SK-N-SH (cell line): ENCODE measurements at regions of chr3 and their contacts with region 1.

Region 1: DNA sequence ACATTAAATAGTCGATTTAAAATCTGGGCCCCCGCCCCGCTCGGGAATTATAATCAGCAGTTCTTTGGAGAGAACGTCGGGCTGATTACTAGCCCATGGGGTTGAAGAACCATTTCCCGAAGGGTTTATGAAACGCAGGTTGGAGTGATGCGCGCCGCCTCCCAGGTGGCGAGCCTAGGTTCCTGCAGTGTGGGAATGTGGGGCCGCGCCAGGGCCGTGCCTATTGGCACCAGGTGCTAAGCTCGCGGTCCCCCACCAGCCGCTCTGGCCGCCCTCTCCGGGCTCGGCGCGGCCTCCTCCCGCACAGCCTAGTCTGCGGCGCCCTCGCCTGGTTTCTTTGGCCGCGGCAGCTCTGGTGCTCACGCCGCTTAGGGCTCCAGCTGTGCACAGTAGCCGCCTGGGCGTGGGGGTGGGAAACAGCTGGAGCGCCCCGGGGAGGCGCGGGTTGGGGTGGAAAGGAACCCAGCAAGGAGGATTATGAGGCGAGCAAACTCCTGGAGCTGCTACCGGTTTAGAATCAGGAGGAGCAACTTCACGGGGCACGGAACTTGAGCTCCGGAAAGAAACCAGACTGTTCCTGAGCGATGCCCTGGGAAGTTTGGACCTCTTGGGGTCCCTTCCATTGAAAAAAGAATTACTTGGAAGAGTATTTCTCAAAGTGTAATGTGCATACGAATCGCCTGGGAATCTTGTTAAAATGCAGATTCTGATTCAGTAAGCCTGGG is 5.6 kb upstream of the MECOM start:
- DNase-seq: peak; percentile 89
- H3K4me3 ChIP-seq: peak overlapping the region; percentile 35 to 54
- H3K27ac ChIP-seq: no peak overlapping the region
- H3K4me1 ChIP-seq: peaks cover 6 to 9% of the 10 kb centered on the region in 2 experiments; a peak in 2 of 4 replicates
- H3K27me3 ChIP-seq: peaks cover 67% of the 10 kb centered on the region
- CTCF ChIP-seq: peak; percentile 66
- EP300 ChIP-seq: no peak
- RAD21 ChIP-seq: peak; percentile 88

Region 2: DNA sequence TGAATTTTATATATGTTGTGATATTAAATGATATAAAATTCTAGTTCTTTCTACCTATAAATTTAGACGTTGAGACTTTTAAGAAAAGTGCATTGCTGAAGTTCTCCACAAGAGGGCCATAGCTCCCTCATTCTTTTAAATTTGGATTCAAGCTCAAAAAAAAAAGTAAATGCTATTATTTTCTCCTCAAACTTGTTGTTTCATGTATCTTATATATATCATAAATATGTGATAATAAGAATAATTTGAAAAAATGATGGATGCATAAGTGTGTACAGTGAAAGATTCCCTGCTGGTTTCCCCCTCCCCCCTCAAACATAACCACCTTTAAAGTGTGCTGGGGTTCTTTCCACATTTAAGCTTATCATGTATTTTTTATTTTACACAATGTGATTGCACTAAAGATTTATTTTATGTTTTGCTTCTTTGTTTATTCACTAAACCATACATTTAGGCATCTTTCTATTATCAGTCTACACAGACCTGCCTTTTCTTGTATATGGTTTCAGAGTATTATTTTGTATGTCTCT is 804.0 kb before region 1 on chr3:
- CTCF ChIA-PET with region 1: interaction called, 40 read pairs
- POLR2A ChIA-PET with region 1: no interaction called
- DNase-seq: peak; percentile 3
- H3K4me3 ChIP-seq: no peak overlapping the region
- H3K27ac ChIP-seq: no peak overlapping the region
- H3K4me1 ChIP-seq: no peaks in the 10 kb centered on the region; a peak in 1 of 4 replicates
- H3K27me3 ChIP-seq: no peaks in the 10 kb centered on the region; the same call in 1 of the 2 replicates
- CTCF ChIP-seq: peak; percentile 84
- EP300 ChIP-seq: no peak
- RAD21 ChIP-seq: peak; percentile 64

Region 3: DNA sequence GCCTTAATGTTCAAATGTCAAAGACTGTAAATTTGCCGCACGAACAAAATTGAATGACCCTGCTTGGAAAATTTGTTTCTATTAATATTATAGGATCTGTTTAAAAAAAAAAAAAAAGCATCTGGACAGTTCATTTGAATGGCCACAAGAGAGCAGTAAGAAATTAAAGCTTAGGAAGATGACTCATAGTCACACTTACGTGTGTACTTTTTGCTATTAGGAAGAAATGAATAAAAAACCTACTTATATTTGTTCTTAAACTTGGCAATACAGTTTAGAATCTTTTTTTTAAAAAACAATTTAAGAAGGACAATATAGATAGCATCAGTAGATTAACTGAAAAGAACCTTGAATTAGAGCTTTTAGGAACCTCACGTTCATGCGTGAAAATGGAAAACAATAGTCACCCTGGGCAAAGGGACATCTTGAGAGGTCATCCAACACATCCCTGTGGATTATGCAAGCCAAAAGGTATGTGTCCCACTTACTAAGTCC is 627.4 kb before region 1 on chr3:
- CTCF ChIA-PET with region 1: interaction called, 21 read pairs
- POLR2A ChIA-PET with region 1: no interaction called
- DNase-seq: peak; percentile 3
- H3K4me3 ChIP-seq: no peak overlapping the region
- H3K27ac ChIP-seq: no peak overlapping the region
- H3K4me1 ChIP-seq: peaks cover 0 to 6% of the 10 kb centered on the region in 2 experiments; a peak in 1 of 4 replicates
- H3K27me3 ChIP-seq: no peaks in the 10 kb centered on the region
- CTCF ChIP-seq: peak; percentile 74
- EP300 ChIP-seq: no peak
- RAD21 ChIP-seq: peak; percentile 51

Region 4: GRCh38 chr3:169133178-169134161 is 535.6 kb before region 1 on chr3:
- CTCF ChIA-PET with region 1: interaction called, 121 read pairs
- POLR2A ChIA-PET with region 1: no interaction called
- DNase-seq: no peak
- H3K4me3 ChIP-seq: no peak overlapping the region
- H3K27ac ChIP-seq: no peak overlapping the region
- H3K4me1 ChIP-seq: no peaks in the 10 kb centered on the region
- H3K27me3 ChIP-seq: peaks cover 8% of the 10 kb centered on the region; the same call in 1 of the 2 replicates
- CTCF ChIP-seq: peak; percentile 62
- EP300 ChIP-seq: no peak
- RAD21 ChIP-seq: peak; percentile 71

Region 5: GRCh38 chr3:169686874-169687273 is 17.8 kb after region 1 on chr3:
- CTCF ChIA-PET with region 1: interaction called, 19 read pairs
- POLR2A ChIA-PET with region 1: no interaction called
- DNase-seq: no peak
- H3K4me3 ChIP-seq: no peak overlapping the region
- H3K27ac ChIP-seq: no peak overlapping the region
- H3K4me1 ChIP-seq: no peaks in the 10 kb centered on the region
- H3K27me3 ChIP-seq: no peaks in the 10 kb centered on the region
- CTCF ChIP-seq: no peak
- EP300 ChIP-seq: no peak
- RAD21 ChIP-seq: no peak